Prostate gland (tissue), 2 donors: ENCODE measurements at regions of chr9 and their contacts with region 1.

Region 1: GRCh38 chr9:114653556-114654159 is 3.9 kb downstream of the TEX53 start:
- DNase-seq: peak; percentile 72
- H3K4me3 ChIP-seq: no peak overlapping the region
- H3K27ac ChIP-seq: peak overlapping the region; percentile 23 to 30
- H3K4me1 ChIP-seq: no peaks in the 10 kb centered on the region
- H3K27me3 ChIP-seq: no peaks in the 10 kb centered on the region
- CTCF ChIP-seq: peak; percentile 82 to 95 (median 90)
- POLR2A ChIP-seq: no peak

Region 2: DNA sequence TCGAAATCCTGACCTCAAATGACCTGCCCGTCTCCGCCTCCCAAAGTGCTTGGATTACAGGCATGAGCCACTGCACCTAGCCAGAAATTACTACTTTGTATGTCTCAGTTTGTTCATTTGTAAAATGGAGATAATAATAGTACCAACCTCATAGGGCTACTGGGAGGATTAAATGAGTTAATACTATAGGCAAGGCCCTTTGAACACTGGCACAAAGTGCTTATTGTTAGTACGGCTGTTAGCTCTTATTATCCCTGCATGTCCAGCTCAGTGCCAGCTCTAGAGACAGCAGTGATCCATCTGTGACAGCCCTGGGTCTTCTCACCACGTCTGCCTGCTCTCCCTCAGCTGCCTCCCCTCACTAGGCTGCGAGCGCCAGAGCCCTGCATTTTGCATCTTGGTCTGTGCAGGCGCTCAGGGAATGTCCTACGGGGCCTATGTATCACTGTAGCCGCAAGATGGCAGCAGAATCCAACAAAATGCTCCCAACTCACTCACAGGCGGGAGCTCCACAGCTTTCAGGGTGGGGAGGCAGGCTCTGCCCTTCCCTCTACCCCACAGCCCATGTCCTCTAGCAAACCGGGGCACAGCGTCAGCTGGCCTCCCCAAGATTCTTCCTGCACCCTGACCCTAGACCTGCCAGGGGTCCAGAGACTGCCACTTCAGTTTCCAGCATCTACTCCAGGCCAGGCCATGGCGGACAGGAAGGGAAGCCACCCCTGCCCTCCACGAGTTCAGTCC is 248.2 kb before region 1 on chr9:
- intact Hi-C with region 1: loop called (anchors 2 kb)
- DNase-seq: peak; percentile 73
- H3K4me3 ChIP-seq: no peak overlapping the region
- H3K27ac ChIP-seq: no peak overlapping the region
- H3K4me1 ChIP-seq: no peaks in the 10 kb centered on the region
- H3K27me3 ChIP-seq: no peaks in the 10 kb centered on the region
- CTCF ChIP-seq: peak; percentile 19 to 82 (median 72)
- POLR2A ChIP-seq: no peak

Region 3: DNA sequence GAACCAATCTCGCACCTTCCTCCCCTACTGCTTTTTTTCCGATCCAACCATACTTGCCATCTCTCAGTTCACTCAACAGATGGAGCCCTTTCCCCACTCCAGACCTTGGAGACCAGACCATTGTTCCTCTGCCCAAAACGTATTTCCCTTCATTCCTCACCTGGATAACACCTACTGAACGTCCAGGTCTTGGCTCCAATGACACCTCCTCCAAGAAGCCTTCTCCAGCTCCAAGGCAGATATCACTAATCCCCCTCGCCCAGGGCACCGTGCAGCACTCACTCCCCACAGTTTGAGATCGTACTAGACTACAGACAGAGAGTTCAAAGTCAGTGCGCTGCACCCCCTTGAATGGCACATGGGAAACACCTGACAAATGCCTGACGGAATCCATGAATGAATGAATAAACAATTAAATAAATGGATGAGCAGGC is 218.8 kb before region 1 on chr9:
- intact Hi-C with region 1: loop called (anchors 2 kb)
- DNase-seq: peak; percentile 39
- H3K4me3 ChIP-seq: no peak overlapping the region
- H3K27ac ChIP-seq: no peak overlapping the region
- H3K4me1 ChIP-seq: no peaks in the 10 kb centered on the region
- H3K27me3 ChIP-seq: no peaks in the 10 kb centered on the region
- CTCF ChIP-seq: peak in 3 of 4 experiments; percentile 35 to 69 (median 69)
- POLR2A ChIP-seq: no peak

Region 4: GRCh38 chr9:114487607-114488300 is 165.9 kb before region 1 on chr9:
- intact Hi-C with region 1: loop called (anchors 5 kb)
- DNase-seq: peak; percentile 77
- H3K4me3 ChIP-seq: no peak overlapping the region
- H3K27ac ChIP-seq: no peak overlapping the region
- H3K4me1 ChIP-seq: no peaks in the 10 kb centered on the region
- H3K27me3 ChIP-seq: no peaks in the 10 kb centered on the region
- CTCF ChIP-seq: peak; percentile 69 to 89 (median 80)
- POLR2A ChIP-seq: no peak

Region 5: GRCh38 chr9:114587385-114588202 is 66.1 kb before region 1 on chr9 and contains the start of gene ATP6V1G1:
- intact Hi-C with region 1: loop called (anchors 10 kb)
- DNase-seq: peak; percentile 99
- H3K4me3 ChIP-seq: peak within 1 kb of the TSS; percentile 72 to 86
- H3K27ac ChIP-seq: peak within 1 kb of the TSS; percentile 95 to 96
- H3K4me1 ChIP-seq: peaks cover 2% of the 10 kb centered on the region
- H3K27me3 ChIP-seq: no peaks in the 10 kb centered on the region
- CTCF ChIP-seq: peak in 2 of 4 experiments; percentile 30 to 31
- POLR2A ChIP-seq: peak; percentile 96
- total RNA-seq, gene ATP6V1G1: 262 to 348 TPM

Region 6: GRCh38 chr9:114852050-114852594 is 198.5 kb after region 1 on chr9:
- intact Hi-C with region 1: no loop called
- DNase-seq: peak; percentile 48
- H3K4me3 ChIP-seq: no peak overlapping the region
- H3K27ac ChIP-seq: peak overlapping the region in 1 of 2 donors; percentile 37
- H3K4me1 ChIP-seq: no peaks in the 10 kb centered on the region
- H3K27me3 ChIP-seq: no peaks in the 10 kb centered on the region
- CTCF ChIP-seq: no peak
- POLR2A ChIP-seq: no peak